Gastrocnemius medialis (tissue), 4 donors: ENCODE measurements at regions of chr6 and their contacts with region 1.

Region 1: GRCh38 chr6:169070506-169071176 is 183.0 kb downstream of the THBS2 start:
- DNase-seq: peak; percentile 87 to 89
- ATAC-seq: peak; percentile 96
- H3K4me3 ChIP-seq: no peak overlapping the region
- H3K27ac ChIP-seq: peak overlapping the region; percentile 64 to 77 (median 70)
- H3K4me1 ChIP-seq: peaks cover 4 to 8% of the 10 kb centered on the region in 2 donors
- H3K27me3 ChIP-seq: peaks cover 0 to 8% (median 0%) of the 10 kb centered on the region in 3 donors
- CTCF ChIP-seq: no peak
- POLR2A ChIP-seq: no peak

Region 2: DNA sequence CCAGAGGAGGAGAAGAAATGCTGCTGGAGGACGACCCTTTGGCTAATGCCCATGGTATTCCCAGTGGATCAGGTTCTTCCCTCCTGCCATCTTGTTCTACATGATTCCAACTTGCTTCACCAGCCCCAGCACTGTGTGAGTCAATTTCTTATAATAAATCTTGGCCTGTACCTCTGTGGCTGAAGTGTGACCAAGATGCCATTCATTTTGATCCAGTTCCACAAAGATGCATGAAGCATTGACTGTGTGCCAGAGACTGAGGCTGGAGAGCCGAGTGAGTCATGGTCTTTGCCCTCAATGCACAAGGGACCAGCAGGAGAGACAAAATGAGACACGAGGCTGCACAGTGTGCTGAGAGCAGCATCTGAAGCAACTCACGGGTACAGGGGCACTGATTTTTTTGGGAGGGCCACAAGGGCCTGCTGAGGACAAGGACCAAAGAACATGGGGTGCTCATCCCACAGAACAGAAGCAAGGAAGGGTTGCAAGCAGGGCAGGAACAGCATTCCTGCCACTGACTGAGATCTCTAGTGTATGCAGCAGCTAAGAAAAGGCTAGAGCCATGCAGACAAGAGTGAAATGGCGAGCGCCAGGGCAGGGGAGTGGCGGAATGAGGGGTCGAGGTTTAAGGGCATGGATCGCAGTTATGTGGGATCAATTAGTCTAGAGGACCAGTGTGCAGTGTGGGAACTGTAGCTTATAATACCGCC is 24.0 kb before region 1 on chr6:
- in situ Hi-C with region 1: no loop called
- intact Hi-C with region 1: loop called (anchors 1 kb)
- DNase-seq: peak; percentile 35 to 85
- ATAC-seq: peak; percentile 91 to 92
- H3K4me3 ChIP-seq: no peak overlapping the region
- H3K27ac ChIP-seq: peak overlapping the region; percentile 65 to 78 (median 70)
- H3K4me1 ChIP-seq: peaks cover 9 to 10% of the 10 kb centered on the region in 2 donors
- H3K27me3 ChIP-seq: no peaks in the 10 kb centered on the region
- CTCF ChIP-seq: no peak
- POLR2A ChIP-seq: no peak